ENCODE measurements at regions of chr1 and their contacts with region 1.

Region 1: GRCh38 chr1:8727809-8728213 is 89.6 kb downstream of the RERE start:
- DNase-seq: no peak

Region 2: GRCh38 chr1:8560611-8561544 is 166.9 kb before region 1 on chr1:
- CTCF ChIA-PET with region 1: interaction called, 13 read pairs
- POLR2A ChIA-PET with region 1: no interaction called
- DNase-seq: peak; percentile 40

Region 3: GRCh38 chr1:8604041-8604945 is 123.5 kb before region 1 on chr1:
- CTCF ChIA-PET with region 1: no interaction called
- POLR2A ChIA-PET with region 1: no interaction called
- DNase-seq: no peak

Region 4: GRCh38 chr1:8660411-8660828 is 67.4 kb before region 1 on chr1:
- CTCF ChIA-PET with region 1: no interaction called
- POLR2A ChIA-PET with region 1: no interaction called
- DNase-seq: no peak

Region 5: DNA sequence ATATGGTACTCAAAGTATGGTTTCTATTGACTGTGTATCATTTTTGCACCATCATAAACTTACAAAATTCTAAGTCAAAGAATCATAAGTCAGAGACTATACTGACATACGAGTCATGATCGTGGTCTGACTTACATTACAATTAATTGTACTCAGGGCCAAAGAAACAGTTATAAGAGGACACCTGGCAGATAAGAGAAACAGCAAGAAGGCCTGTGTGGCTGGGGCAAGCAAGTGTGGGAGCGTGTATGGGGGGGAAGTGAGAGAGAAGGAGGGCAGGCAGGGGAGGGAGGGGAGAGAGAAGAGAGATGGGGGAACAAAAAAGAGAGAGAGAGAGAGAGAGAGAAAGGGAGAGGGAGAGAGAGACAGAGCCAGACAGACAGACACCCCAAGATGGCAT is 18.7 kb after region 1 on chr1:
- CTCF ChIA-PET with region 1: no interaction called
- POLR2A ChIA-PET with region 1: no interaction called
- DNase-seq: no peak

Region 6: GRCh38 chr1:8814865-8815264 is 87.1 kb after region 1 on chr1:
- CTCF ChIA-PET with region 1: interaction called, 12 read pairs
- POLR2A ChIA-PET with region 1: interaction called, 3 read pairs
- DNase-seq: no peak

Measured in HEK293T (cell line).